ENCODE measurements at regions of chr16 and their contacts with region 1.

Region 1: DNA sequence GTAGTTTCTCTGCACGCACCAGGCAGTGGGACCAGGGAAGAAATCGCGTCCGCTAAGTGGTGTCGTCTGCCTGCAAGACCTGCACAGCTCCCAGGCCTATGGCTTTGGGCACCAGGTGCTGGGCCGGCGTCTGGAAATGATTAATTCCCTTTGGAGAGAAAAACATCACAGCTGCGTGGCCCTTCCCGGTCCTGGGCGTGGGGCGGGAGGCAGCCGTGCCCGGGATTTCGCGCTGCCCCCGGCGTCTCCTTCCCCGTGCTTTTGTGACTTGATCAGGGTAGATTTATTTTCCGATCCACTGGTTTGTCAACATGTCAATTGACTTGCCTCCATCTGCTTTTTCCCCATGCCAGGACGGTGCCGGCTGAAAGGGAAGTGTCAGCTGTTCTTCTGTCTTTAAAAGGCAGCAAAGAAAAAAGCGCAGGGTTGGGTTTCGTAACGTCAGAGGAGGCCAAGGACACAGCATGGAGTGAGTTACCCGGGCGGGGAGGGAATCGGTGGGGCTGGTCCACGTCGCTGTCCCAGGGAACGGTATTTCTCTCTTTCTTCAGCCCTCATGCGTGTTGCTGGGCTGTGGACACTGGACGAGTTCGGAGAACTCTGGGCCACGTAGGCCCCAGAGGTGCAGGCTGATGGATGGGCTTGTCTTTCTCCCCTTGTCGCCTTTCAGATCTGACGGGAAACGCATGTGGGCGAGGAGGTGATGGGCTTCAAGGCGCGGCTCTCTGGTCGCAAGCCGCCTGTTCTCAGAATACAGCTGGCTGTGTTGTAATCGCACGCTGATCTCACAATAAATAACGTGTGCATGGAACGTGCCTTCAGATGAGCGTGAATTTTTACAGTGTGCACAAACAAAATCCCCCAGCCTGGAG is 188.1 kb upstream of the ZNF469 start:
- DNase-seq: peak in 1 of 2 donors; percentile 52
- H3K4me3 ChIP-seq: no peak overlapping the region
- H3K27ac ChIP-seq: peak overlapping the region in 2 of 5 donors; percentile 5 to 9
- H3K4me1 ChIP-seq: peaks cover 0 to 5% (median 1%) of the 10 kb centered on the region in 4 donors
- H3K27me3 ChIP-seq: no peaks in the 10 kb centered on the region
- CTCF ChIP-seq: no peak
- EP300 ChIP-seq: no peak
- POLR2A ChIP-seq: no peak

Region 2: GRCh38 chr16:87172632-87173031 is 1022.0 kb before region 1 on chr16:
- intact Hi-C with region 1: no loop called
- DNase-seq: no peak
- H3K4me3 ChIP-seq: no peak overlapping the region
- H3K27ac ChIP-seq: no peak overlapping the region
- H3K4me1 ChIP-seq: peaks cover 0 to under 1% (median 0%) of the 10 kb centered on the region in 4 donors
- H3K27me3 ChIP-seq: peaks cover 0 to 23% (median 8%) of the 10 kb centered on the region in 3 donors
- CTCF ChIP-seq: no peak
- EP300 ChIP-seq: no peak
- POLR2A ChIP-seq: no peak

Region 3: GRCh38 chr16:88437373-88437964 is 242.8 kb after region 1 on chr16:
- intact Hi-C with region 1: loop called (anchors 10 kb)
- DNase-seq: peak; percentile 72 to 82
- H3K4me3 ChIP-seq: no peak overlapping the region
- H3K27ac ChIP-seq: no peak overlapping the region
- H3K4me1 ChIP-seq: peaks cover 0 to 12% (median 9%) of the 10 kb centered on the region in 4 donors
- H3K27me3 ChIP-seq: peaks cover 0 to 66% (median under 1%) of the 10 kb centered on the region in 3 donors
- CTCF ChIP-seq: peak in 6 of 7 experiments; percentile 39 to 95 (median 87)
- EP300 ChIP-seq: no peak
- POLR2A ChIP-seq: no peak